CD8-positive, alpha-beta T cell (primary cell): ENCODE measurements at regions of chr16 and their contacts with region 1.

Region 1: GRCh38 chr16:58000706-58001676 is at the start of gene USB1:
- DNase-seq: peak; percentile 68 to 92 (median 84)
- ATAC-seq: peak; percentile 77
- H3K4me3 ChIP-seq: peak within 1 kb of the TSS; percentile 69 to 82
- H3K4me3 Mint-ChIP-seq: peak within 1 kb of the TSS; percentile 91
- H3K27ac ChIP-seq: peak within 1 kb of the TSS; percentile 61 to 71
- H3K27ac Mint-ChIP-seq: peak within 1 kb of the TSS; percentile 87
- H3K4me1 ChIP-seq: peaks cover 43% of the 10 kb centered on the region
- H3K4me1 Mint-ChIP-seq: peaks cover 64% of the 10 kb centered on the region
- H3K27me3 ChIP-seq: no peaks in the 10 kb centered on the region
- H3K27me3 Mint-ChIP-seq: no peaks in the 10 kb centered on the region
- CTCF ChIP-seq: peak; percentile 77
- total RNA-seq, gene USB1: 24.7 to 27.9 TPM

Region 2: GRCh38 chr16:57535680-57536305 is 465.2 kb before region 1 on chr16:
- CTCF ChIA-PET with region 1: no interaction called
- POLR2A ChIA-PET with region 1: no interaction called
- intact Hi-C with region 1: loop called in 1 of 2 experiments (anchors 2 kb)
- DNase-seq: peak; percentile 83 to 97 (median 92)
- ATAC-seq: peak; percentile 82
- H3K4me3 ChIP-seq: peak overlapping the region; percentile 69 to 80
- H3K4me3 Mint-ChIP-seq: peak overlapping the region; percentile 81
- H3K27ac ChIP-seq: peak overlapping the region; percentile 64 to 96
- H3K27ac Mint-ChIP-seq: peak overlapping the region; percentile 96
- H3K4me1 ChIP-seq: peaks cover 81% of the 10 kb centered on the region
- H3K4me1 Mint-ChIP-seq: peaks cover 70% of the 10 kb centered on the region
- H3K27me3 ChIP-seq: no peaks in the 10 kb centered on the region
- H3K27me3 Mint-ChIP-seq: no peaks in the 10 kb centered on the region
- CTCF ChIP-seq: no peak

Region 3: DNA sequence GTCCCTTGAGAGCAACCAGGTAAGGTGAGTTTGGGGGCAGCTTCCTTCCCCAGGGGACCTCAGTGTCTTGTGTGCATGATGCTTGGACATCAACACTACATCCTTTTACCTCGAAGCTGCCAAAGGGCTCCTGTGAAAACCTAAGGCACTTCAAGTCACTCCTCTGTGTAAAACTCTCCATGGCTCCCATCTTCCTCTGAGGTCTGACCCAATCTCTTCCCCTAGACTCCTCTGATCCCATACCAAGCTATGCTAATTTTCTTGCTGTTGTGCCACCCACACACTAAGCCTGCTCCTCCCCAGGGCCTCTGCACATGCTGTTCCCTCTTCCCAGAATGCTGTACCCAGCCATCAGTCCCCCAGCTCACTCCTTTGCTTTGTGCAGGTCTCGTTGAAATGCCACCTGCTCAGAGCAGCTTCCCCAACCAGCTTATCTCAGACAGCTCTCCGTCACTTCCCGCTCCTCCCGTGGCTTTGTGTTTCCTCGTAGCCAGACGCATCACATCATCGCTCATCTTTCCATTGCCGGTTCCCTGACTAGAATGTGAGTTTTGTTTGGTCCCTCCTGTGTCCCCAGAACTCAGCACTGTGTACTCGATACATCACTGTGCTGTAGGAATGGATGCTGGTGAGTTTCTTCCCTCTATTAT is 108.4 kb before region 1 on chr16:
- CTCF ChIA-PET with region 1: interaction called, 143 read pairs
- POLR2A ChIA-PET with region 1: no interaction called
- intact Hi-C with region 1: no loop called
- DNase-seq: no peak
- ATAC-seq: no peak
- H3K4me3 ChIP-seq: no peak overlapping the region
- H3K4me3 Mint-ChIP-seq: no peak overlapping the region
- H3K27ac ChIP-seq: no peak overlapping the region
- H3K27ac Mint-ChIP-seq: no peak overlapping the region
- H3K4me1 ChIP-seq: peaks cover 6% of the 10 kb centered on the region
- H3K4me1 Mint-ChIP-seq: peaks cover 9% of the 10 kb centered on the region
- H3K27me3 ChIP-seq: no peaks in the 10 kb centered on the region
- H3K27me3 Mint-ChIP-seq: peaks cover 29% of the 10 kb centered on the region
- CTCF ChIP-seq: no peak

Region 4: DNA sequence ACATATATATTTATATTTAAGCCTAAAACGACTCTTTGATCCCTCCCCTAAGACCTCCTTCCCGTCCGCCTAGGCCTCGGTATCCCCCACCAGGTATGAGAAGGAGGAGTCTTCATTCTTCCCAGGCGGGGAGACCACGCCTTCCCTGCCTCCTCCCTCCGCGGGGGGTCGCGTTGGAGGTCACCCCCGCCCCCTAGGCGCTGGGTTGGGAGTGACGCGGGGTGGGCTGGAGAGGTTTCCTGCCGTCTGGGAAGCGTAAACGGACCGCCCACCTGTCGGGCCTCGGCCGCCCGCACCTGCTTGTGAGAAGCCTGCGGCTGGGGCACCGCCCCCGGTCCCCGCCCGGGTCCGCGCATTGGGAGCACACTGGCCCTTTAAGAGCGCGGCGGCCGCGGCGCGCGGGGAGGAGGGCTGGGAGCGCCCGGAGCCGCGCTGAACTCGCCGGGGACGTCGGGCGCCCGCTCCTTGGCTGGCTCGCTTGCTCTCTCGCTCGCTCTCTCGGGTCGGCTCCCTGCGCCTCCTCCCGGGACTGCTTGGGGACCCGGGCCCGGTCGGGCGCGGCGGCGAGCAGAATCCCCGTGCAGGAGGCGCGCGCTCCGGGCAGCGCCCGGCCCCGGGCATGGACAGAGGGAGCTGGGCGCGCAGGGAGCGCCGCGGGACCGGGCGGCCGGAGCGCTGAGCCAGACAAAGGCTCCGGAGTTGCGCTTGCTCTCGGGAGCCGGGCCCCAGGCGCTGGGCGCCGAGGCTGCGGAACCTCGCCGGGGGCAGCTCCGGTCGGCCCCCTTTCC is 24.6 kb after region 1 on chr16 and contains the start of gene MMP15:
- CTCF ChIA-PET with region 1: interaction called, 4 read pairs
- POLR2A ChIA-PET with region 1: interaction called, 4 read pairs
- intact Hi-C with region 1: loop called in 1 of 2 experiments (anchors 2 kb)
- DNase-seq: peak in 8 of 9 experiments; percentile 39 to 71 (median 60)
- ATAC-seq: peak; percentile 65
- H3K4me3 ChIP-seq: peak within 1 kb of the TSS; percentile 60 to 66
- H3K4me3 Mint-ChIP-seq: peak within 1 kb of the TSS; percentile 90
- H3K27ac ChIP-seq: peak within 1 kb of the TSS in 1 of 2 experiments; percentile 18
- H3K27ac Mint-ChIP-seq: peak within 1 kb of the TSS; percentile 83
- H3K4me1 ChIP-seq: peaks cover 8% of the 10 kb centered on the region
- H3K4me1 Mint-ChIP-seq: peaks cover 13% of the 10 kb centered on the region
- H3K27me3 ChIP-seq: peaks cover 0 to 10% of the 10 kb centered on the region in 2 experiments
- H3K27me3 Mint-ChIP-seq: peaks cover 6% of the 10 kb centered on the region
- CTCF ChIP-seq: no peak
- total RNA-seq, gene MMP15: 0.19 to 0.92 TPM

Region 5: DNA sequence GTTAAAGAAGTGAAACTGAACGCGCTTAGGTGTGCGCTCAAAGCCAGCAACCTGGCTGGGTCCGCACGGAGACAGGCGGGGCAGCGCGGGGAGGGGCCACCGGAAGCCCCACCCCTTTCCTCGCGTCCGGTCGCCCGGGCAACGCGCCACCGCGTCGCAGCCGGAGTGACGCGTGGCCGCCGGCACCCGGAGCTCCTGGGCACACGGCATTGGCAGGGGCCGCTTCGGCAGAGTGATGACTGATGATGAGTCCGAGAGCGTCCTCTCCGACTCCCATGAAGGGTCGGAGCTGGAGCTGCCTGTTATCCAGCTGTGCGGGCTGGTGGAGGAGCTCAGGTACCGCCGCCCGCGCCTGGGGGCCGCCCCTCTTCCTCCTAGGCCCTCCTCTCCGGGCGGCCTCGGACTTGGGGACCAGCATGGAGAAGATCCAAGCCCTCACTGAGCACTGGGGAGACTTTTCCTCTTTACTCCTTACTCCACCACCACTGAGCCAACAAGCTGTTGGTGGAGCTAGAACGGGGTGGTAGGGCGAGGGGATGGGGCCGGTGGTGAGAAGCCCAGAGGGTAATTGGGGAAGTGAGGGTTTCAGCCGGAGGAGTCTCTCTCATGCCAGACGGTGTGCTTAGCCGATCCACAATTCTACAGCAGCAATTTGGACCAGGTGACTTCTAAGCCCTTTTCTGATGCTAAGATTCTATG is 248.9 kb after region 1 on chr16:
- CTCF ChIA-PET with region 1: no interaction called
- POLR2A ChIA-PET with region 1: no interaction called
- intact Hi-C with region 1: loop called in 1 of 2 experiments (anchors 2 kb)
- DNase-seq: peak; percentile 70 to 91 (median 81)
- ATAC-seq: peak; percentile 98
- H3K4me3 ChIP-seq: peak overlapping the region; percentile 64 to 75
- H3K4me3 Mint-ChIP-seq: peak overlapping the region; percentile 83
- H3K27ac ChIP-seq: peak overlapping the region in 1 of 2 experiments; percentile 21
- H3K27ac Mint-ChIP-seq: no peak overlapping the region
- H3K4me1 ChIP-seq: peaks cover 10% of the 10 kb centered on the region
- H3K4me1 Mint-ChIP-seq: peaks cover 9% of the 10 kb centered on the region
- H3K27me3 ChIP-seq: peaks cover 0 to 6% of the 10 kb centered on the region in 2 experiments
- H3K27me3 Mint-ChIP-seq: peaks cover 2% of the 10 kb centered on the region
- CTCF ChIP-seq: no peak

Region 6: GRCh38 chr16:58399718-58400633 is 399.0 kb after region 1 on chr16:
- CTCF ChIA-PET with region 1: no interaction called
- POLR2A ChIA-PET with region 1: no interaction called
- intact Hi-C with region 1: no loop called
- DNase-seq: no peak
- ATAC-seq: no peak
- H3K4me3 ChIP-seq: no peak overlapping the region
- H3K4me3 Mint-ChIP-seq: no peak overlapping the region
- H3K27ac ChIP-seq: no peak overlapping the region
- H3K27ac Mint-ChIP-seq: no peak overlapping the region
- H3K4me1 ChIP-seq: no peaks in the 10 kb centered on the region
- H3K4me1 Mint-ChIP-seq: no peaks in the 10 kb centered on the region
- H3K27me3 ChIP-seq: no peaks in the 10 kb centered on the region
- H3K27me3 Mint-ChIP-seq: no peaks in the 10 kb centered on the region
- CTCF ChIP-seq: no peak

Region 7: GRCh38 chr16:58629572-58630104 is 628.6 kb after region 1 on chr16 and contains the start of gene CNOT1:
- CTCF ChIA-PET with region 1: no interaction called
- POLR2A ChIA-PET with region 1: no interaction called
- intact Hi-C with region 1: loop called in 1 of 2 experiments (anchors 10 kb)
- DNase-seq: peak; percentile 95 to 99 (median 97)
- ATAC-seq: peak; percentile 78
- H3K4me3 ChIP-seq: peak within 1 kb of the TSS; percentile 93
- H3K4me3 Mint-ChIP-seq: peak within 1 kb of the TSS; percentile 100
- H3K27ac ChIP-seq: peak within 1 kb of the TSS; percentile 91 to 98
- H3K27ac Mint-ChIP-seq: peak within 1 kb of the TSS; percentile 100
- H3K4me1 ChIP-seq: peaks cover 18% of the 10 kb centered on the region
- H3K4me1 Mint-ChIP-seq: peaks cover 30% of the 10 kb centered on the region
- H3K27me3 ChIP-seq: no peaks in the 10 kb centered on the region
- H3K27me3 Mint-ChIP-seq: no peaks in the 10 kb centered on the region
- CTCF ChIP-seq: no peak
- total RNA-seq, gene CNOT1: 165 to 177 TPM